Activated CD4-positive, alpha-beta T cell treated with anti-CD3 and anti-CD28 coated beads, Interleukin-2, amount 10 ng/mL, durations not matched to agents 7 days and 5 days (primary cell): ENCODE measurements at regions of chr17 and their contacts with region 1.

Region 1: GRCh38 chr17:43388359-43389045 is 10.3 kb upstream of the ARL4D start:
- DNase-seq: peak; percentile 93
- H3K4me3 Mint-ChIP-seq: peak overlapping the region; percentile 85
- H3K27ac Mint-ChIP-seq: peak overlapping the region; percentile 97
- H3K4me1 Mint-ChIP-seq: peaks cover 28% of the 10 kb centered on the region
- H3K27me3 Mint-ChIP-seq: no peaks in the 10 kb centered on the region

Region 2: DNA sequence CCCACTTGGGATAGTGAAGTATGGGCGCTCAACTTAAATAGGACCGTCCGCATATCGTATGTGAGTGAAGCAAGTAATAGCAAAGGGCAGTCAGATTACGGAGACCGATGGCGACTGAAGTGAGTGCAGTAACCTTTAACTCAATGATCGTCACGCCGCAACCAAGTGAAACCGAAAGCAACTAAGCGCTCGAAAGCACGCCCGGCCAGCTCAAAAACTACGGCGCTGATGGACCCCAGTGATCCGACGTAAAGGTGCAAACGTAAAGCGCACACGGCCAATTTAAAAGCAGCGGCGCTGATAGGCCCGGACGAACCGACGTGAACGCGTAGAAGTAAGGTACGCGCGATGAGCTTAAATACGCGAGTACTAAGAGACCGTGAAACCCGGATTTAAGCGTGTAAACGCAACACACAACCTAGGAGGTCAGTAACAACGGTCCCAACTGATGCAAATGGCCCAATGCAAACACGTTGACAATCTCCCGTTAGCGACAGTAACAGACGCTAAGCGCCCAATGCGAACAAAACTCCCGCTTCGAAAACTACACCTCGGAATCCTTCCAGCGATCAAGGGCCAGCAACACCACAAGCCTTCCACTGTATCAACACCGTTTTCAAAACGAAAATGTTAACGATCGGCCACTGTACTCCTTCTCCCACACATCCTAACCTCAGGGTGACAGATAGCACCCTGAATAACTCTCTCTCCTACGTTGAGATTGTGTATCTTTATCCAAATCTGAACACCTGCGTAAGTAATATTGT is 27.6 kb before region 1 on chr17:
- CTCF ChIA-PET with region 1: interaction called, 5 read pairs
- POLR2A ChIA-PET with region 1: interaction called, 13 read pairs
- DNase-seq: peak; percentile 87
- H3K4me3 Mint-ChIP-seq: peak overlapping the region; percentile 86
- H3K27ac Mint-ChIP-seq: peak overlapping the region; percentile 100
- H3K4me1 Mint-ChIP-seq: peaks cover 16% of the 10 kb centered on the region
- H3K27me3 Mint-ChIP-seq: no peaks in the 10 kb centered on the region

Region 3: GRCh38 chr17:43367737-43368242 is 20.7 kb before region 1 on chr17:
- CTCF ChIA-PET with region 1: interaction called, 13 read pairs
- POLR2A ChIA-PET with region 1: interaction called, 34 read pairs
- DNase-seq: peak; percentile 71
- H3K4me3 Mint-ChIP-seq: peak overlapping the region; percentile 97
- H3K27ac Mint-ChIP-seq: peak overlapping the region; percentile 100
- H3K4me1 Mint-ChIP-seq: peaks cover 55% of the 10 kb centered on the region
- H3K27me3 Mint-ChIP-seq: no peaks in the 10 kb centered on the region